ENCODE measurements at regions of chr14 and their contacts with region 1.

Region 1: DNA sequence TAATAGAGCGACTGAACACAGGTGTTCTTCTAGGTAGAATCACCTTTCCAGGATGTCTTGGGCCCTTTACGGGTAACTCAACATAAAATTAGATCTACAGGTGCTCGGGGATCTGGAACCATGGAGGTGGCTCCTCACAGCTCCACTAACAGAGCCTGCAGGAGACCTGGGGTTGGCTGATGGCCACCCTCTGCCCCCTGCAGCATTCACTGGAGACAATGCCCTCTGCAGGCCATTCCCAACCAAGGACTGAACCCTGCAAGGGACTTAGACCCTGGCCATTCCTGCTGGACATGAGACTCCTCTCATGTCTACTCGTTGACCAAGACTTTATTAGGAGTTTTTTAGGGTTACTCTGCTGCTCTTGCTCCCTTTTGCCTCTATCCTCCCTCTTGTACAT is 58.5 kb upstream of the PPP4R3A start:
- DNase-seq: peak; percentile 55
- ATAC-seq: peak; percentile 100
- H3K4me3 ChIP-seq: no peak overlapping the region
- H3K27ac ChIP-seq: no peak overlapping the region
- H3K4me1 ChIP-seq: no peaks in the 10 kb centered on the region
- H3K27me3 ChIP-seq: peaks cover 0 to 6% of the 10 kb centered on the region in 2 experiments; a peak in 3 of 5 replicates
- CTCF ChIP-seq: peak; percentile 88
- EP300 ChIP-seq: no peak
- POLR2A ChIP-seq: no peak
- RAD21 ChIP-seq: peak; percentile 77

Region 2: GRCh38 chr14:91482263-91483013 is 86.2 kb before region 1 on chr14:
- CTCF ChIA-PET with region 1: no interaction called
- POLR2A ChIA-PET with region 1: no interaction called
- in situ Hi-C with region 1: no loop called
- intact Hi-C with region 1: loop called (anchors 10 kb)
- DNase-seq: no peak
- ATAC-seq: no peak
- H3K4me3 ChIP-seq: no peak overlapping the region
- H3K27ac ChIP-seq: no peak overlapping the region
- H3K4me1 ChIP-seq: no peaks in the 10 kb centered on the region
- H3K27me3 ChIP-seq: no peaks in the 10 kb centered on the region; a peak in 1 of 5 replicates
- CTCF ChIP-seq: no peak
- EP300 ChIP-seq: no peak
- POLR2A ChIP-seq: no peak
- RAD21 ChIP-seq: no peak

Region 3: GRCh38 chr14:91510174-91511042 is 58.2 kb before region 1 on chr14 and contains the start of gene PPP4R3A:
- CTCF ChIA-PET with region 1: no interaction called
- POLR2A ChIA-PET with region 1: interaction called, 5 read pairs
- in situ Hi-C with region 1: no loop called
- intact Hi-C with region 1: loop called (anchors 1 kb)
- DNase-seq: peak; percentile 86
- ATAC-seq: peak; percentile 89
- H3K4me3 ChIP-seq: peak within 1 kb of the TSS; percentile 75 to 93 (median 85)
- H3K27ac ChIP-seq: peak within 1 kb of the TSS; percentile 99
- H3K4me1 ChIP-seq: peaks cover 25% of the 10 kb centered on the region
- H3K27me3 ChIP-seq: no peaks in the 10 kb centered on the region; a peak in 2 of 5 replicates
- CTCF ChIP-seq: peak; percentile 16; the same call in 1 of the 2 replicates
- EP300 ChIP-seq: no peak
- POLR2A ChIP-seq: peak; percentile 79 to 87
- RAD21 ChIP-seq: peak; percentile 27; the same call in 1 of the 2 replicates
- total RNA-seq, gene PPP4R3A: 57.4 and 89.0 TPM in 2 replicates

Measured in HepG2 (cell line).